ENCODE measurements at regions of chr11 and their contacts with region 1.

Region 1: GRCh38 chr11:119728651-119729580 is at the start of gene NECTIN1:
- DNase-seq: peak; percentile 82 to 93 (median 88)
- H3K4me3 ChIP-seq: peak within 1 kb of the TSS; percentile 67
- H3K27ac ChIP-seq: peak within 1 kb of the TSS; percentile 71 to 73
- H3K4me1 ChIP-seq: peaks cover 11% of the 10 kb centered on the region
- H3K27me3 ChIP-seq: no peaks in the 10 kb centered on the region
- CTCF ChIP-seq: peak; percentile 87 to 93 (median 90)
- EP300 ChIP-seq: no peak
- POLR2A ChIP-seq: peak; percentile 48
- total RNA-seq, gene NECTIN1: 1.5 to 12.1 (median 6.3) TPM

Region 2: DNA sequence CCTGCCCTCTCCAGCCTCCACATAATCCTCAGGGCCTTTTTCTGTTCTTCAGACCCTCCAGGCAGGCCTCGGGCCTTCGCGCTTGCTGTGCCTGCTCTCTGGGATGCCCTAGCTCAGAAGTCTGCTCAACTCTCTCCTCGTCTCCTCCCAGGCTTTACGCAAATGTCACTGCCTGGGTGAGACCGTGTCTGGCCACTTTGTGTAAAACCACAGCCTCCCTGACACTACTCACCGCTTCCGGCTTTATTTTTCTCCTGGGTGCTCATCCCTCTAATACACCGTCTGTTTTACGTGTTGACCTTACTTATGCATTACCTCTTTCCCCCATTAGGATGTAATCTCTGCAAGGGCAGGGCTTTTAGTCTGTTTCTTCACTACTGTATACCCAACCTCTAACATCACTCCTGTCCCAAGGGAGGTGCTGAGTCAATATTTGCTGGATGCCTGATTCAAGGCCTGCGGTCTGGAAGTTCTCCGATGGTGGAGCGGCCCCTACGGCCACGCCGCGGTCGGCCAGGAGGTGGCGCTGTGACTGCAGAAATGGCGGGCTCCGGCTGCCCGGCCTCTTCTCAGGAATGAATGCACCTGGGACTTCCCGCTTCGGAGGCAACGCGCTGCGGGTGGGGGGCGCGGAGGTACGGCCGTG is 247.8 kb before region 1 on chr11:
- intact Hi-C with region 1: loop called in 1 of 4 experiments (anchors 10 kb)
- DNase-seq: peak; percentile 61 to 90 (median 81)
- H3K4me3 ChIP-seq: no peak overlapping the region
- H3K27ac ChIP-seq: no peak overlapping the region
- H3K4me1 ChIP-seq: no peaks in the 10 kb centered on the region
- H3K27me3 ChIP-seq: no peaks in the 10 kb centered on the region
- CTCF ChIP-seq: peak; percentile 60 to 95 (median 85)
- EP300 ChIP-seq: no peak
- POLR2A ChIP-seq: no peak

Region 3: DNA sequence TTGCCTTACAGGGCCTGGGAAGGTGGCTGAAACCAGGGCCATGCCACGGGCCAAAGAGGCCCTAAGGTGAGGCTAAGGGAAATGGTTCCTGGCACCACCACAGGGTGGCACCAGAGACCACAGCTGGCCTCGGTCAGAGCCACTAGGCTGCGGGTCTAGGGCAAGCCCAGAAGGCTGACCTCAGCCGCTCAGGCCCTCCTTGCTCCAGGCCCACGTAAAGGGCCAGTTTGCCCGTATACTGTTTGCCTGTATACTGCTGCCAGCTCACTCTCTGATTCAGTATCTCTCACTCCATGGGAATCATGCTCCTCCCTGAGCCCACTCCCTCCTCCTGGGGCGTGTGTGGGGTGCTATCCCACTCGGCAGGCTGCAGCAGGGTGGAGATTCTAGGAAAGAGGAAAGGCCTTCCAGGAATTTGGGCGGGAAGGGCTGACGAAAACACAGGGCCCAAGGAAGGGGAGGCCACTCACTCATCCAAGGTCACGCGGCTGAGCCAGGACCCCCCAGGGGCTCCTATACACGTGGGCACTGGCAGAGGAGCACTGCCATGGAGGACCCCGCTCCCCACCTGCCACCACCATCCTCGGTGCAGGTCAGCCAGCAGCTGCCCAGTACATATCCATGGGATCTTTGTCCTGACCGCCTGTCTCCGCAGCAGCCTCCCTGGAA is 62.3 kb before region 1 on chr11:
- intact Hi-C with region 1: loop called (anchors 5 kb)
- DNase-seq: peak; percentile 64 to 85 (median 79)
- H3K4me3 ChIP-seq: no peak overlapping the region
- H3K27ac ChIP-seq: no peak overlapping the region
- H3K4me1 ChIP-seq: peaks cover 4% of the 10 kb centered on the region
- H3K27me3 ChIP-seq: no peaks in the 10 kb centered on the region
- CTCF ChIP-seq: peak; percentile 79 to 87 (median 80)
- EP300 ChIP-seq: no peak
- POLR2A ChIP-seq: no peak

Region 4: GRCh38 chr11:119673759-119674336 is 55.1 kb before region 1 on chr11:
- intact Hi-C with region 1: loop called (anchors 5 kb)
- DNase-seq: no peak
- H3K4me3 ChIP-seq: no peak overlapping the region
- H3K27ac ChIP-seq: no peak overlapping the region
- H3K4me1 ChIP-seq: peaks cover 9% of the 10 kb centered on the region
- H3K27me3 ChIP-seq: no peaks in the 10 kb centered on the region
- CTCF ChIP-seq: no peak
- EP300 ChIP-seq: no peak
- POLR2A ChIP-seq: no peak

Region 5: DNA sequence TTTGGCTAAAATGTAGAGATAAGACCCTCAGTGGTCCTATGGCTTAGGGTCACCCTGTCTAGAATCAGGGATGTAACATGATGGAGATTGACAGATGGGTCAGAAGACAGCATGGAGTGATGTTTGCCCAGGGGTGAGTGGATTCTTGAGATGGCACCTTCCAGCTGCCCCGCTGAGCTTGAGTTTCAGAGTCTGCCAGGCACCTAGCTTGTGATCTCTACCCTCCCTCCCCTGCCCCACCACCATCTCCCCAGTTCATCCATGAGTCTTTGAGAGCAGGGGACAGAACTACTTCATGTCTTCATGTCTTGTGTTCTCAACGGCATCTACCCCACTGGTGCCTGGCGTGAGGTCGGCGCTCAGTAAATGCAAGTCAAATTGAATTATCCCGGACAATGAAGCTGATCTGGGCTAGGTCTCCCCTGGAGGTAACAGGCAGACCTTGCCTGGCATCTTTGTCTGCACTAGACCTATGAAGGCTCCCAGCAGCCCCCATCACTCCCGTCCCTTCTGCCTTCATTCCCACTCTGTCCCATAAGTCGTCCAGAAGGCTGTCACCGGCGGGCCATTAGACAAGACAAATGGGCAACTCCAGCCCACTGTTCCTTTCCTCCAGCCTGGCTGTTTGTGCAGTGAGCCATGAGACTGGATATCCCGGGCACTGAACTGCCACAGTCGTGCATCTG is 1055.8 kb after region 1 on chr11:
- intact Hi-C with region 1: no loop called
- DNase-seq: no peak
- H3K4me3 ChIP-seq: no peak overlapping the region
- H3K27ac ChIP-seq: no peak overlapping the region
- H3K4me1 ChIP-seq: no peaks in the 10 kb centered on the region
- H3K27me3 ChIP-seq: no peaks in the 10 kb centered on the region
- CTCF ChIP-seq: no peak
- EP300 ChIP-seq: no peak
- POLR2A ChIP-seq: no peak

Measured in ovary (tissue), 10 donors.